Heart left ventricle (tissue), 16 donors: ENCODE measurements at regions of chr15 and their contacts with region 1.

Region 1: DNA sequence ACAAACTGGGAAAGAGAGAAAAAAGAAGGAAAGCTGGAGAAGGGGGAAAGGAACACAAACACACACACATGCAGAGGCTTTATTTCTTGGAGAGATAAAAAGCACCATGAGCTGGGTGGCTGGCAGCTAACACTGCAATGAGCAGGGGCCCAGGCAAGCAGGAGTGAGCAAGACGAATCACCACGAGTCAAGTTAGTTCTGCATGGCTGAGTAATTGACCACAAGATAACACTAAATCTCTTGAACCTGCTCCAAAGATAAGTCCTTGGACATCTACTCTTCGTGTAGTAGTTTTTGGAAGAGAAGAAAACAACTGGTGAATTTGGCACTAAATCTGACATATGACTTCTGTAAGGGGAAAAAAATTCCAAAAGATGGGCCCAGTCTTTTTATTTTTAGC is 100.9 kb downstream of the MYO5A start:
- DNase-seq: peak in 1 of 5 donors; percentile 42
- ATAC-seq: peak; percentile 57 to 84 (median 74)
- H3K4me3 ChIP-seq: no peak overlapping the region
- H3K27ac ChIP-seq: peak overlapping the region in 8 of 12 donors; percentile 2 to 36 (median 22)
- H3K4me1 ChIP-seq: peaks cover 0 to 18% (median 2%) of the 10 kb centered on the region in 12 donors
- H3K27me3 ChIP-seq: no peaks in the 10 kb centered on the region
- CTCF ChIP-seq: no peak
- POLR2A ChIP-seq: no peak

Region 2: GRCh38 chr15:51982013-51982769 is 445.6 kb before region 1 on chr15:
- intact Hi-C with region 1: loop called in 1 of 10 experiments (anchors 5 kb)
- DNase-seq: peak in 2 of 5 donors; percentile 22 to 44
- ATAC-seq: peak; percentile 53 to 80 (median 77)
- H3K4me3 ChIP-seq: peak overlapping the region in 9 of 12 donors; percentile 9 to 50 (median 34)
- H3K27ac ChIP-seq: peak overlapping the region; percentile 33 to 79 (median 66)
- H3K4me1 ChIP-seq: peaks cover 0 to 24% (median 17%) of the 10 kb centered on the region in 12 donors
- H3K27me3 ChIP-seq: no peaks in the 10 kb centered on the region
- CTCF ChIP-seq: peak; percentile 24 to 63 (median 53)
- POLR2A ChIP-seq: no peak

Region 3: DNA sequence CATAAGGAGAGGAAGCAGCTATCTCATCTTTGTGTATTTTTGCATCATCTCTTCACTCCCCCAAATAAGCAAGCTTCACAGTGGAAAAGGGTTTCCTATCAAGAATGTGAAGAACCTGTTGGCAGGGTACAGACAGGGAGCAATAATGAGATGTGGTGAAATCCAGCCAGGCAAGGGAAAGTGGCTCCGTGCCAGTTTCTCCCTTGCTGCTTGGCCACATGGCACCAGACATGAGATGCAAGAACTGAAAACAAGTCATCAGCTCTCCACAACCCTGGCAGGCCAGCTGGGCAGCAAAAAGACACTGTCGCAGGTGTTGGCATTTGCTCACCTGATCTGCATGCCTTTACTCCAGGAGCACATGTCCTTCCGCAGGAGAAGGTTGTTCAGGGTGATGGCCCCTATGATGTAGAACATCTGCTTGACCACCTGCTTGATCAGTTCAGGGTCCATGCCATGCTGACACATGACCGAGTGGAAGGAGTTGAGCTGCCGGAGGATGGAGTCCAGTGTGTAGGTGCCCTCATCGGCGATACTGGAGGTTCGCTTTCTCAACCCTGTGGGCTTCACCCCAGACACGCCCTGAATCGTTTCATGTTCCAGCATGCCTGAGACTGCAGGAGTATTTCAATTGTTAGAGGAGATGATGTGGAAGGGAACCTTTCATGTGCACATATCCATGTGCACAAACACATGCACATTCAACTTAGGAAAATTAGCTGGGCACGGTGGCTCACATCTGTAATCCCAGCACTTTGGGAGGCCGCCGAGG is 108.9 kb before region 1 on chr15:
- intact Hi-C with region 1: no loop called
- DNase-seq: peak; percentile 59 to 79 (median 70)
- ATAC-seq: peak; percentile 89 to 93 (median 92)
- H3K4me3 ChIP-seq: no peak overlapping the region
- H3K27ac ChIP-seq: no peak overlapping the region
- H3K4me1 ChIP-seq: peaks cover 0 to 5% (median 0%) of the 10 kb centered on the region in 12 donors
- H3K27me3 ChIP-seq: no peaks in the 10 kb centered on the region
- CTCF ChIP-seq: no peak
- POLR2A ChIP-seq: no peak